Transverse colon (tissue), 4 donors: ENCODE measurements at regions of chr9 and their contacts with region 1.

Region 1: GRCh38 chr9:122754825-122755224 is 12.7 kb downstream of the OR1L6 start:
- DNase-seq: no peak
- H3K4me3 ChIP-seq: no peak overlapping the region
- H3K27ac ChIP-seq: no peak overlapping the region
- H3K4me1 ChIP-seq: no peaks in the 10 kb centered on the region
- H3K27me3 ChIP-seq: no peaks in the 10 kb centered on the region
- CTCF ChIP-seq: no peak
- EP300 ChIP-seq: no peak
- POLR2A ChIP-seq: no peak

Region 2: GRCh38 chr9:122672481-122672880 is 82.3 kb before region 1 on chr9:
- in situ Hi-C with region 1: no loop called
- intact Hi-C with region 1: loop called (anchors 5 kb)
- DNase-seq: no peak
- H3K4me3 ChIP-seq: no peak overlapping the region
- H3K27ac ChIP-seq: no peak overlapping the region
- H3K4me1 ChIP-seq: no peaks in the 10 kb centered on the region
- H3K27me3 ChIP-seq: no peaks in the 10 kb centered on the region
- CTCF ChIP-seq: no peak
- EP300 ChIP-seq: no peak
- POLR2A ChIP-seq: no peak

Region 3: DNA sequence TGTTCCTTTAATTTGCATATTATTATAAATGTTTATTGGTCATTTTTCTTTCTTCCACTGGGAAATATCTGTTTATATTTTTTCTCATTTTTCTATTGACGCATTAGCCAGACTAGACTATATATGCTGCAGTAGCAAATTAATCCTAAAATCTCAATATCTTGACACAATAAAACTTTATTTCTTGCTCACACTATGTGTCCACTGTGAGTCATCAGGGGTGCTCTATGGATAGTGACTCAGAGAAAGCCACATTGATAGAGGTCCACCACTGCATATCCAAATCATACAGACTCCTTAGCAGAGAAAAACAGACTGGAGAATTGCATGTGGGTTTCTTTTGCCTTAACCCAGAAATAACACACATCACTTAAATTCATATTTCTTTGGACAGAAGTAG is 59.1 kb before region 1 on chr9:
- in situ Hi-C with region 1: no loop called
- intact Hi-C with region 1: loop called (anchors 2 kb)
- DNase-seq: no peak
- H3K4me3 ChIP-seq: no peak overlapping the region
- H3K27ac ChIP-seq: no peak overlapping the region
- H3K4me1 ChIP-seq: no peaks in the 10 kb centered on the region
- H3K27me3 ChIP-seq: no peaks in the 10 kb centered on the region
- CTCF ChIP-seq: no peak
- EP300 ChIP-seq: no peak
- POLR2A ChIP-seq: no peak